ENCODE measurements at regions of chr3 and their contacts with region 1.

Region 1: DNA sequence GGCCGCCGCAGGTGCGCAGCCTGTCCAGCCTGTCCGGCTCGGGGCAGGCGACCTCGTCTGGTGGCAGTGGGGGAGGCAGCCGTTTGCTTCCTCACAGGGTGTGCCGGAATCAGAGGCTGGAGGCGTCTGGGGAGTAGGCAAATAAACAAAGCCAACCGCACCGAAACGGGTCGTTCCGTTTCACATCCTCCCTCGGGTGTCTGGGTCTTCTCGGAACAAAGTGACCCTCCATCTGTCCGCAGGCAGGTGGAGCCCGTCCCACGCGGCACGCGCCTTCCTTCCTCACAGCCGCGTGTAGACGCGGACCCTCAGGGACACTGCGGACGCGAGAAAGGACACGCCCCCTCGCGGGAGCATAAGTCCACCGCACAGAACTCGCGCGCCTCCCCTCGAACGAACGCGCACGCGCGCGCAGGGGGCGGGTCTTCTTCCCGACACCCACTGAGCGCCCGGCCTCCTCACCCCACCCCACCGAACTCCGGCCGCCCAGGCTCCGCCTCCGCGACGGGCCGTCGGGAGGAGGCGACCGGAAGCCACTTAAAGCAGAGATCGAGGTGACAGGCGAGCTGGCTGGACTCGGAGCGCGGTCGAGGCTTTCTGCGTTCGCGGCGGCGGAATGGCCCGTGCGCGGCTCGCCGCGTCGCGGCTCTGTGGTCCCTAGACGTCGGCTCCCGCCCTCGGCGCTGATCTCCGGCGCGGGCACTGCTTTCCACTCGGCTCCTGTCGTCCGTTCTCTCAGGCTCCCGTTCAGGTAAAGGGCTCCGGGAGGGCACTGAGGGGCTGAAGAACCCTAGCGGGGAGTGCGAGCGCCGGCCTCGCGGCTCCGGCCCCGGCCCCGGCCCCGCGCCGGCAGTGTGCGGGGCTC is at the start of gene TIPARP:
- DNase-seq: peak; percentile 100
- H3K4me3 ChIP-seq: peak within 1 kb of the TSS; percentile 76 to 86 (median 82)
- H3K27ac ChIP-seq: peak within 1 kb of the TSS; percentile 85 to 99 (median 98)
- H3K4me1 ChIP-seq: peaks cover 12 to 62% (median 40%) of the 10 kb centered on the region in 6 donors
- H3K27me3 ChIP-seq: no peaks in the 10 kb centered on the region
- CTCF ChIP-seq: peak; percentile 74 to 95 (median 84)
- POLR2A ChIP-seq: peak; percentile 75 to 98 (median 93)
- total RNA-seq, gene TIPARP: 18.9 to 39.8 (median 29.7) TPM

Region 2: DNA sequence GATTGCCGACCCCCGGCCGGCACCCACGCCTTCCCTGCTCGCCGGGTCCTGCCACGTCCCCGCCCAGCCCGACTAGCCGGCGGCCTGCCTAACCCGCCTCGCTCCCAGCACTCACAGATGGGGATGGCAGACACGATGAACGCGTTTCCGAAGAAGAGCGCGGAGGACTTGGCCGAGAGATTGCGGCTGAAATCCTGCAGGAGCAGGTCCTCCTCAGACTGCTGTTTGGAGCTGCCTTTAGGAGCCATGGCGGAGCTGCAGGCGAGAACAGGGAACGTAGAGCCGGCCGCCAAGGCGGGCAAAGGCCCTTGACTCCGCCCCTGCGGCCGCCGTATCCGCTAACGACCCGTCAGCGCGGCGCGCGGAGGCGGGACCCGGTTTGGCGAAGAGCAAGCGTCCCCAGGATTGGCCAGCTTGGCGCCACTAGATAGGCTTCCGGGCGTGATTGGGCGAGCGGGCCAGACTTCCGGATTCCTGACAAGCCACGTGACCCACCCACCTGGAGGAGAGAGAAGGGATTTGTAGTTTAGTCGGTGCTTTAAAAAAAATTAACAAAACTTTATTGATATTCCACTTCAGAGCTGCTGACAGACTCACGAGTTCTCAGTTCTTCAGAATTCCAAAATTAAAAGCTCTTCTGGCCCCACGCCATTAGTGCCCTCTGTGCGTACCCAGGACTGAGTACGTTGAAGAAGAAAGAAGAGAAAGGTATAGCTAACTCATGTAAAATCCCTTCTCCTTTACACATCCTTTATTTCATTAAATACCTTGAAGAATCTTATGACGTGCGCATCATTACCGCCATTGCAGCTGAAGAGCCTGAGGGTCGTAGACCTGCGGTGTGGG is 119.2 kb before region 1 on chr3 and contains the start of gene SSR3:
- intact Hi-C with region 1: loop called (anchors 10 kb)
- DNase-seq: peak; percentile 99
- H3K4me3 ChIP-seq: peak within 1 kb of the TSS; percentile 73 to 93 (median 82)
- H3K27ac ChIP-seq: peak within 1 kb of the TSS; percentile 66 to 91 (median 86)
- H3K4me1 ChIP-seq: peaks cover 18 to 51% (median 38%) of the 10 kb centered on the region in 6 donors
- H3K27me3 ChIP-seq: no peaks in the 10 kb centered on the region
- CTCF ChIP-seq: peak; percentile 30 to 88 (median 68)
- POLR2A ChIP-seq: peak in 1 of 3 donors; percentile 67
- total RNA-seq, gene SSR3: 88.0 to 123 (median 107) TPM

Region 3: GRCh38 chr3:156576651-156577343 is 97.5 kb before region 1 on chr3:
- intact Hi-C with region 1: no loop called
- DNase-seq: no peak
- H3K4me3 ChIP-seq: no peak overlapping the region
- H3K27ac ChIP-seq: no peak overlapping the region
- H3K4me1 ChIP-seq: peaks cover 0 to 21% (median 2%) of the 10 kb centered on the region in 6 donors
- H3K27me3 ChIP-seq: no peaks in the 10 kb centered on the region
- CTCF ChIP-seq: no peak
- POLR2A ChIP-seq: no peak

Region 4: DNA sequence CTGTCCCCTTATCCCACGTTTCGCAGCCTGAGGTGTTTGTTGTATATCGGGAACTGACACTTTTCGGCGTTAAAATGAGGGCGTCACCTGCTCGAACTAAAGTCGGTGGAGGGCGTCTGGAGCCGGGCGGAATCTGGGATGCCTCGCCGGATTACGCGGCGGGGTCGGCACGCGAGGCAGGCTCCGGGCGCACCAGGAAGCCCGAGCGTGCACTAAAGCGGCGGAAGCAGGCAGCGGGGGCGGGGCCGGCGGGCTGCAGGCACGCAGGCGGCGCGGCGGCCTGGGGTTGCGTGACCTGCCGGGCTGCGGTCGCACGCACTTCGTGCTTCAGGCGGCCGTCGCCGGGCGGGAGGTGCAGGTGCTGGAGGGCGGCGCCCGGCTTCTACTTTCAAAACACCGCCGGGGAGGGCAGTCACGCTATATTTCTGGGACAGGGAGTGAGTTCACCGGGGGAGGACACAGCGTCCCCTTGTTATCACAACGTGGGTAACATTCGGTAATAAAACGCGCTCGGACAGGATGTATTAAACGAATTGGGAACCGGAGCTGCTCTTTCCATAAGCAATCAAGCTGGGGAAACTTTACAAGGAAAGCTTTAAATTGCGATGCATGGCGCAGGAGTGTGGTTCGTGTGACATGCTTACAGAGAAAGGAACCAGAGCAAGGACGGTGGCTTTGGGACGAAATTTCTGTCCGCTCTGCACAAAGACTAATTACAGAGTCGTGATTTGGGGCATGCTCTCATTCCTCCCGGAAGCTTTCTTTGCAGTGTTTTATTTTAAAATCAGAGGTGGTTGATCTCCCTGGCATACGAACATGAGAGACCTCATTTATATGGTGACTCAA is 142.7 kb after region 1 on chr3:
- intact Hi-C with region 1: loop called (anchors 10 kb)
- DNase-seq: peak; percentile 98
- H3K4me3 ChIP-seq: peak overlapping the region; percentile 29 to 84 (median 64)
- H3K27ac ChIP-seq: peak overlapping the region; percentile 72 to 89 (median 81)
- H3K4me1 ChIP-seq: peaks cover 7 to 38% (median 28%) of the 10 kb centered on the region in 6 donors
- H3K27me3 ChIP-seq: no peaks in the 10 kb centered on the region
- CTCF ChIP-seq: peak in 3 of 11 experiments; percentile 11 to 13 (median 11)
- POLR2A ChIP-seq: peak in 1 of 3 donors; percentile 33

Region 5: DNA sequence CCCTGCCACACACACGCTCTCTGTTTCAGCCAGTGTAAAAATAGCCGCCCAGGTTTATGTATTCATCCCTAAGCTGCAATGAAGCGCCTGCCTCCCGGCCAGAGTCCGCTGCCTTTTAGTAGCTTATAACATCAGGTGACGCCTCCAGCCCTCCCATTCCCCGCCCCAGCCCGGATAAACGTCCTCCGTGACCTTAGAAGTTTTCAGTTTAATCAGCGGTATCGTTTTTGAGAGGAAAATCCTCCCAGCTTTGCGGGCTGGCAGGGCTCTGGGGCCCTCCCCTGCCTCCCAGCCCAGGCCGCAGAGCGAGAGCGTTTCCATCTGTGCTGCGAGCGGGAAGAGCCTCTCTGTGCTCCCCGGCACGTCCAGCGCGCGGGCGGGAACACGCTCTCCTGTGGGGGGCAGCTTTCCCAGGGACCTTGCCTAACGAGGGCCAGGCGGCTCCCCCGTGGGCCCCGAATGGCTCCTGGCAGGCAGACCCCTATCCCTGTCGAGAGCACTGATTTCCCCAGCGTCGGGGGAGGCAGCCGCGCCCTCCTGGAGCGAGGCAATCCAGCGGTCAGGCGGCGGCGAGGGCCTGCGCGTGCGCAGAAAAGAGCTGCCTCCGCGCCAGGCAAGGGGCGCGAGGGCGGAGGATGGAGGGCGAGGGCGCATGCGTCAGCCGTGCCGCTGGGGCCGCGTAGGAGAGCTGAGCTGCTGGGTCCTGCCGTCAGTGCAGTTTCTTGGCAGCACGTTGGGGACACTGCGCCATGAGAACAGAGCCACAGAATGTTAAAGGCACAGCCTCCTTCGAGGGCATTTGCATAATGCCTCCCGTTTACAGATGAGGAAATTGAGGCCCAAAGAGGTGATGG is 414.6 kb after region 1 on chr3:
- intact Hi-C with region 1: loop called (anchors 5 kb)
- DNase-seq: peak; percentile 98
- H3K4me3 ChIP-seq: peak overlapping the region; percentile 48 to 77 (median 56)
- H3K27ac ChIP-seq: peak overlapping the region; percentile 95 to 99 (median 96)
- H3K4me1 ChIP-seq: peaks cover 16 to 53% (median 38%) of the 10 kb centered on the region in 6 donors
- H3K27me3 ChIP-seq: peaks cover 0 to 4% (median 0%) of the 10 kb centered on the region in 7 donors
- CTCF ChIP-seq: peak in 7 of 11 experiments; percentile 4 to 35 (median 25)
- POLR2A ChIP-seq: peak in 1 of 3 donors; percentile 71

Region 6: DNA sequence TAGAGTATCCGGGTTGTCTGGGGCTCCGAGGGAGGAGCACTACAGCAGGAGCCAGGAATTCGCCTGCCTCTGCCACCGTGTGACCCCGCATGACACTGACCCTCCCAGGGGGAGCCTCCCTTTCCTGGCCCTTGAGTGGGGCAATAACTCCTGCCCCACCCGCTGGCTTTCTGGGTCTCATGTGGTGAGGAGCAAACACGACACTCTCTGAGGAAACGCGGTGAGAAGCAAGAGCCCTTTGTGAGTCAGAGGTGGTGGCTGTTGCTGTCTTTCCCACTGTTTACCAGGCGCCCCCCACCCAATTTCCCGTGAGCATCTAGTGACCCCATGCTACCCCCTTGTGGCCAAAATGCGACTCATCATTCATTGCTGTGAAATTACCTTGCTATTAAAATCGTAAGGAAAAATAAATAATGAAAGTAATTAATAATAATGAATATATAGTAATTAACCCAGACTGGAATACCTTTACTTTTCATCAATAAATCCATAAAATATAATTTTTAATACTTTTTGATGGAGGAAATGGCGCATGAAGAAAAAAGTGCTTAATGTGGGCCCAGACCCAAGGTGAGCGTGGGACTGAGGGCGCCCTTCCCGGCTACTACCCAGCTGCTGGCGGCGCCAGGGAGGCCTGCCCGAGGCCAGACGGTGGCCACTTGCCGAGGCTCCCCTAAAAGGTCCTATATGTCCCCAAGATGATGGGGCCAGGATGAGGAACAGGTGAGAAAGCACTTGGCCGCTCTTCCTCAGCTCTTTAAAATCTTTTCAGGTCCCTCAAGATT is 456.4 kb after region 1 on chr3:
- intact Hi-C with region 1: loop called (anchors 10 kb)
- DNase-seq: peak; percentile 78
- H3K4me3 ChIP-seq: peak overlapping the region in 2 of 8 donors; percentile 13 to 35
- H3K27ac ChIP-seq: peak overlapping the region; percentile 39 to 87 (median 72)
- H3K4me1 ChIP-seq: peaks cover 14 to 65% (median 44%) of the 10 kb centered on the region in 6 donors
- H3K27me3 ChIP-seq: no peaks in the 10 kb centered on the region
- CTCF ChIP-seq: peak; percentile 15 to 68 (median 61)
- POLR2A ChIP-seq: no peak